SK-N-SH (cell line): ENCODE measurements at regions of chr5 and their contacts with region 1.

Region 1: DNA sequence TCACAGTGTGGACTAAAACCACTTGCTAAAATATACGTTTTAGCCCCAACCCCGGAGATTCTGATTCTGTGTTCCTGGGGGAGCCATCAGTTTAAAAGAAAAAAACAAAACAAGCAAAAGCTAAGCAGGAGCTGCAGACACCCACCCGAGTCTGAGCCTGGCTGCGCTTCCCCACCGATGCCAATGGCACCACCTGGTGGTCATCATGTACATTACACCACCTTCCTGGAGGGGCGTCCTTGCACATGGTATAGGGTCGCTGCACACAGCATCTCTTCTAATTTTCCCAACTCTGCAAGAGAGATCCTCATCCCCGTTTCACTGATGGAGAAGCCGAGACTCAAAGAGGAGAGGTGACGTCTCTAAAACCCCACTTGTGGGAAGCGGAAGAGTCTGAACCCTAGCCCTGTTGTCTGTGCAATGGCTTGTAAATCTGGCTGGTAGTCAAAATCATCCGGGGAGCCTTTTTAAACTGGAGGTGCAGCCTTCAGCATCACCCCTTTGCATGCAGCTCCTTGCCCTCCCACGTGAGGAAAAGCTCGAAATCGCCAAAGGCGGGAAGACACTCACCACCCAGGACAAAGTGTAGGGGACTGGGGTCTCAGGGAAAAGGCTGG is 23.1 kb upstream of the CNOT6 start:
- DNase-seq: peak; percentile 87
- H3K4me3 ChIP-seq: no peak overlapping the region; a peak in 1 of 4 replicates
- H3K27ac ChIP-seq: no peak overlapping the region
- H3K4me1 ChIP-seq: no peaks in the 10 kb centered on the region; a peak in 1 of 4 replicates
- H3K27me3 ChIP-seq: no peaks in the 10 kb centered on the region
- CTCF ChIP-seq: peak; percentile 90
- EP300 ChIP-seq: no peak
- RAD21 ChIP-seq: peak; percentile 85

Region 2: DNA sequence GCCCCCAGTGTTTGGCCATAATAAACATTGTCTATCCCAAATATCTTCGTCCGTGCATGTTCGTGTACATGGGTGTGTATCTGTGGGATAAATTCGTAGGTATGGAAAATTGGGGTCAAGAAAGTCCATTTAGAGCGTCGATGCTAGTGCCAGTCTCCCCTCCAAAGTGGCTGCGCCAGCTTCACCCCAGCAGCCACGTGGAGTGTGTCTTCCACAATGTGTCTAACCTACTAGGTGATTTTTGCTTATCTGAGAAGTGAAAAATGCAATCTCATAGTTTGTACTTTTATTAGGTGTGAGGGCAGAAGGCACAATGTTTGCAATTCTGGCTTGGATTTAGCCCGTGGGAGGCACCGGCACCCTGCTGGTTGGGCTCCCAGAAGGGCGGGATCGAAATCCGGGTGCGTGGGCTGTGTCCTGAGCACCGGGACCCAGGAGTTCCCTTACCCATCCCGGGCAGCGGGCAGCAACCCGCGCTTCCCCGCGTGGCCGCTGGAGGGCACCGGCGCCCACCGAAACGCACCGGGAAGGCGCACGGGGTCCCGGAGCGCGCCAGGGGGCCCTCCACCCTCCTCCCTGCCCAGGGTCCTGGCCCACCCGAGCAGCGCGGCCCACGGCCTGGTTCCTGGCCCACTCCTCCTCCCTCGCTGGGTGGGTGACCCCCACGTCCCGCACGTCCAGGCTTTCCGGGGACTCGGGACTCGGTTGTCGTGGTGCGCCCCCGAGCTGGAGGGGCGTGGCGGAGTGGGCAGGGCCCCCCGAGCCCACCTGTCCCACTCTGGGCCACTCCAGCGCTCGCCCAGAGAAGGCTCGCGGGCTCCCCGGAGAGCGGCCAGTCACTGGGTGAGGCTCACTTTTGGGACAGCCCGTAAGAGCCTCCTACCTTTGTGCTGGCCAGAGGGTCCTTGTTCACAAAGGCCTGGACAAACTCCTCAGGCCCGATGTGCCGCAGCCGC is 344.1 kb before region 1 on chr5:
- CTCF ChIA-PET with region 1: interaction called, 12 read pairs
- POLR2A ChIA-PET with region 1: no interaction called
- DNase-seq: peak; percentile 92
- H3K4me3 ChIP-seq: peak overlapping the region; percentile 27 to 41; a peak in 2 of 4 replicates
- H3K27ac ChIP-seq: no peak overlapping the region
- H3K4me1 ChIP-seq: peaks cover 0 to 6% of the 10 kb centered on the region in 2 experiments; a peak in 1 of 4 replicates
- H3K27me3 ChIP-seq: peaks cover 9% of the 10 kb centered on the region; the same call in 1 of the 2 replicates
- CTCF ChIP-seq: peak; percentile 74
- EP300 ChIP-seq: no peak
- RAD21 ChIP-seq: peak; percentile 80

Region 3: GRCh38 chr5:180209137-180209581 is 261.9 kb before region 1 on chr5 and contains the start of gene RASGEF1C:
- CTCF ChIA-PET with region 1: interaction called, 10 read pairs
- POLR2A ChIA-PET with region 1: no interaction called
- DNase-seq: peak; percentile 97
- H3K4me3 ChIP-seq: peak within 1 kb of the TSS; percentile 23 to 48; a peak in 3 of 4 replicates
- H3K27ac ChIP-seq: no peak within 1 kb of the TSS
- H3K4me1 ChIP-seq: peaks cover 0 to 19% of the 10 kb centered on the region in 2 experiments; a peak in 1 of 4 replicates
- H3K27me3 ChIP-seq: no peaks in the 10 kb centered on the region; the same call in 1 of the 2 replicates
- CTCF ChIP-seq: no peak
- EP300 ChIP-seq: no peak
- RAD21 ChIP-seq: peak; percentile 41
- polyA plus RNA-seq, gene RASGEF1C: not detected in 2 replicates

Region 4: DNA sequence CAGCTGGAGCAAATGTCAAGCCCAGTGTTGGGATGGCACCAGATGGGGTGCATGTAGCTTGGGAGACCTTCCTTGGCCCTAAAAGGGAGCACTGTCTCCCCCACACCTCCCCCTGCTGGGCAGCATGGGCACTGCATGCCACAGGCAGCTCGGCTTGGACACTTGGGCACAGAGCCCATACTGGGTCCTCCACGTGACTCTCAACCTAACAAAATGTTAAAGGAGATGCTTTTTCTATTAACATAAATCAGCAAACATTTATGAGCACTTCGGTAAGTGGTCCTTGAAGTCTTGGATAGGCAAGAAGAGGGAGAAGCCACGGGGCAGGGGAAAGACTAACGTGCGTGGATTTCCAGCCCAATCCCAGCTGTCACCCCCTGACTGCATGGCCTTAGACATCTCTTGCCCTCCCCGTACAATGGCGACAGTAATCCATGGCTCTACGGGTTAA is 155.3 kb before region 1 on chr5:
- CTCF ChIA-PET with region 1: interaction called, 27 read pairs
- POLR2A ChIA-PET with region 1: no interaction called
- DNase-seq: peak; percentile 85
- H3K4me3 ChIP-seq: no peak overlapping the region; a peak in 1 of 4 replicates
- H3K27ac ChIP-seq: no peak overlapping the region
- H3K4me1 ChIP-seq: peaks cover 0 to 2% of the 10 kb centered on the region in 2 experiments; a peak in 1 of 4 replicates
- H3K27me3 ChIP-seq: no peaks in the 10 kb centered on the region
- CTCF ChIP-seq: peak; percentile 90
- EP300 ChIP-seq: no peak
- RAD21 ChIP-seq: peak; percentile 75

Region 5: DNA sequence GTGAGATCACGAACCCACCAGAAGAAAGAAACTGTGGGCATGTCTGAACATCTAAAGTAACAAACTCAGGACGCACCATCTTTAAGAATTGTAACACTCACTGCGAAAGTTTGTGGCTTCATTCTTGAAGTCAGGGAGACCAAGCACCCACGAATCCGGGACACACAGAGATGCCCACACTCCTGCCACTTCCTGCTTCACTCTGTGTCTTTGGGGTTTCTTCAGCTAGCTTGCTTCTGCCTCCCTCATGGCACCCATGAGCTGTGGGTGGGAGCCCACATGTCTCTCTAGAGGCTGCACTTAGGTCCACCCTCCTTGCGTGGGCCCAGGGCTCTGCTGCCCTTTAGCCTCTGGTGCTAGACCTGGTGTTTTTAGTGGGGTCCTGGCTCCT is 38.0 kb before region 1 on chr5:
- CTCF ChIA-PET with region 1: no interaction called
- POLR2A ChIA-PET with region 1: no interaction called
- DNase-seq: no peak
- H3K4me3 ChIP-seq: no peak overlapping the region
- H3K27ac ChIP-seq: no peak overlapping the region
- H3K4me1 ChIP-seq: no peaks in the 10 kb centered on the region
- H3K27me3 ChIP-seq: no peaks in the 10 kb centered on the region
- CTCF ChIP-seq: no peak
- EP300 ChIP-seq: no peak
- RAD21 ChIP-seq: no peak

Region 6: DNA sequence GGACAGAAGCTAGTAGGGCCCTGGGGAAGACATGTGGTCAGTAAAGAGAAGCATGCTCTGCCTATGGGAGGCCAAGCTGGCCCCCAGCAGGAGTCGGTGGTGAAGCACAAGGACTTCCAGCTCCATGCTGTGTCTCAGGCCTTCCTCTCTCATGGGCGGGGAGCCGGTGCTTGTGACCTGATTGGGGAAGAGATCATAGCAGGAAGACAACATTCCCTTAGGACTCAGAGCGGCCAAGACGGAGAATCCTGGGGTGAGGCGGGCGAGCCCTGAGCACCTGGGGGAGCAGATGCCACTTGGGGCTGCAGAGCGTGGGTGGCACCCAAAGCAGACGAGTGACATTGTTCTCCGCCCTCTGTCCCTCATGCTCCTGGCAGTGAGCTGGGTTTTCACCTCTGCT is 10.2 kb before region 1 on chr5:
- CTCF ChIA-PET with region 1: interaction called, 17 read pairs
- POLR2A ChIA-PET with region 1: no interaction called
- DNase-seq: no peak
- H3K4me3 ChIP-seq: no peak overlapping the region
- H3K27ac ChIP-seq: no peak overlapping the region
- H3K4me1 ChIP-seq: no peaks in the 10 kb centered on the region
- H3K27me3 ChIP-seq: no peaks in the 10 kb centered on the region
- CTCF ChIP-seq: no peak
- EP300 ChIP-seq: no peak
- RAD21 ChIP-seq: no peak

Region 7: DNA sequence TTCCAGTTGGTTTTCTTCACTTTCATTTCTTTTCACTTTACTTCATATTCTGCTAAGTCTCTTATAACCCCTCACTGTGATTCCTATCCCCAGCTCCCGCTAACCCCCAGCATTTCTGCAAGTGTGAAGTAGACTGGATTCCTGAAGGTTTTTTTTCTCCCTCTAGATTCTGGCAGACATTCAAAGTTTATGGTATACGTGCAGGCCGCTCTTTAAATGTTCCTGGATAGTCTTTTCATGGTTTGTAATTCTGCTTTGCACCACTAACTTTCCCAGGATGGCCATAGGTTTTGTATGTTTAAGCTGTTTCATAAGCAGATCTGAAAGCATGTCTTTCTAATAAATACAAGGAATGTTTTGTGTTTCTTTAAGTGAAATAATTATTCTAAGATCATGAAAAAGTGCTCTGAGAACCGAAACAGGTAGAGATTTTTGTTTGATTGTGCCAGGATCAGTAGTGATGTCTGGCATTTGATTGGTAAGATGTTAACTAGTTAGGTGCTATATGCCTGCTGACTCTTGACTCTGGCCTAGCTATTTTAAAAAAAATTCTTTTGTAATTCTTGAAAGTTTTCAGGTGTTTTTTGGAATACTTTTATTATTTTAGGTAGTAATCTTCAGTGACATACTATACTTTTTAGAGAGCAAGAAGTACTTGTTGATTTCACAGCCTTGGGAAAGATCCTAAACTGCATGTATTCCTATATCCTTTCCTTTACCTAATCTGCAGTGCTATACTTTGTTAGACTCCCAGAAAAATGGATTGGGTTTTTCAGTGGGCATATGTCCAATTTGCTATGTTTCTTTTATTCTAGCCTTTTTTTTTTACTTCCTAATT is 52.8 kb after region 1 on chr5:
- CTCF ChIA-PET with region 1: no interaction called
- POLR2A ChIA-PET with region 1: no interaction called
- DNase-seq: no peak
- H3K4me3 ChIP-seq: no peak overlapping the region
- H3K27ac ChIP-seq: no peak overlapping the region
- H3K4me1 ChIP-seq: peaks cover 0 to 13% of the 10 kb centered on the region in 2 experiments; a peak in 2 of 4 replicates
- H3K27me3 ChIP-seq: no peaks in the 10 kb centered on the region
- CTCF ChIP-seq: no peak
- EP300 ChIP-seq: no peak
- RAD21 ChIP-seq: no peak